Activated naive CD4-positive, alpha-beta T cell treated with anti-CD3 and anti-CD28 coated beads for 36 hours (primary cell): ENCODE measurements at regions of chr21 and their contacts with region 1.

Region 1: DNA sequence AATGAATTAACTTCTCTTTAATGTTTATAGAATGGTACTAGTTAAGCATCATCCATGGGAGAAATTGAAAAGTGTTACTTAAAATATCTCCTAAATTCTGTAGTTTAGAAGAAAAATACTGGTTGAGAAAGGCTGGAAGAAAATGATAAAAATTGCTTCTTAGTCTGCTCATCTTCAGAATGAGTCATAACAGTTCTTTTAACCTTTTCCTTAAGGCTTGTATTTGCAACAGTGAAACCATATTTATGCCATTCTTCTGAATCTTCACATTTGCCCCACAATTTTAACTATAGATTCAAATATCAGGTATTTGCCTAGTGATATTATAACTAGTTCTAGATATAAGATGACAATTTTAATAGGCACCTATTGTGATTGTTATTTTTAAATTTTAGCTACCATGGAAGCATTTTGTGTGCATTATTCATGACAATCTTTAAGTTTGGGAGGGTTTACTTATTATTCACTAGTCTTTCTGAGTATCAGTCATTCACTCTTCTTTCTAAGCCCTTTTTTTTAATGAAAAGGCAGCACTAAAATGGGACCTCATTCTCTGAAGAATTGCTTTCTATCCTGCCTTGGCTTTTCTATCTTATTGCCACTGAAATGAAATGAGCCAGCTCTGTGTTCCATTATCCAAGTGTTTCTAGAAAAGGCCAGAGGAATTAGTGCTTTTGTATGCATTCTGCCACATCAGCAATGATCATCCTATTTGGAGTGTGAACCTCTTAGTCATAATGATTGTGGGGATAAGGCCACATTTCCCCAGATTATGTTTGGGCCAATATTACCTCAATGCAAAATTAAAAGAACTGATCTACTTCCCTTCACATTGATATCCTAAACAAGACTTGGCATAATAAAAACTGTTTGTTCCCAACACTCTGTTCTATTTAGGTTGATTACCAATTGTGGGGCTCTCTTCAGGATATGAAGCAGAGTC is 58.4 kb downstream of the SAMSN1 start:
- DNase-seq: no peak
- H3K4me3 Mint-ChIP-seq: no peak overlapping the region
- H3K27ac Mint-ChIP-seq: peak overlapping the region; percentile 81
- H3K4me1 Mint-ChIP-seq: peaks cover 51% of the 10 kb centered on the region
- H3K27me3 Mint-ChIP-seq: no peaks in the 10 kb centered on the region

Region 2: DNA sequence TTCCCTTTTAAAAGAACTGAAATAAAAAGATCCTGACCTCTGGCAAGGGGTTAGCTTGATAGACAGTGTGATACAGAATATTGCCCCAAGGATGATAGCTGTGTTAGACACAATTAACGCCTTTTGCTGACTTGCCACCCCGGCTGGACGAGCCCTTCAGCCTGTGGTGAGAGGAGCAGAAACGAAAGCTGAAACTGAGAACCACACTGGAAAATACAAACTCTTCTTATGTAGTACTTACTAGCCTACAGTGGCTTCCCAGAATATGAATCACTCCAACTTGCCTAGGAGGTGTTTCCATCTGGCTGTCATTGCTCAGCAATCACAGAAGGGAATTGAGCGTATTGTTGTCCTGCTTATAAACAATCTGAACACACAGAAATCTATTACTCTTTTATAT is 35.5 kb after region 1 on chr21:
- CTCF ChIA-PET with region 1: interaction called, 3 read pairs
- intact Hi-C with region 1: loop called (anchors 2 kb)
- DNase-seq: peak; percentile 51
- H3K4me3 Mint-ChIP-seq: peak overlapping the region; percentile 55
- H3K27ac Mint-ChIP-seq: peak overlapping the region; percentile 68
- H3K4me1 Mint-ChIP-seq: peaks cover 53% of the 10 kb centered on the region
- H3K27me3 Mint-ChIP-seq: no peaks in the 10 kb centered on the region

Region 3: DNA sequence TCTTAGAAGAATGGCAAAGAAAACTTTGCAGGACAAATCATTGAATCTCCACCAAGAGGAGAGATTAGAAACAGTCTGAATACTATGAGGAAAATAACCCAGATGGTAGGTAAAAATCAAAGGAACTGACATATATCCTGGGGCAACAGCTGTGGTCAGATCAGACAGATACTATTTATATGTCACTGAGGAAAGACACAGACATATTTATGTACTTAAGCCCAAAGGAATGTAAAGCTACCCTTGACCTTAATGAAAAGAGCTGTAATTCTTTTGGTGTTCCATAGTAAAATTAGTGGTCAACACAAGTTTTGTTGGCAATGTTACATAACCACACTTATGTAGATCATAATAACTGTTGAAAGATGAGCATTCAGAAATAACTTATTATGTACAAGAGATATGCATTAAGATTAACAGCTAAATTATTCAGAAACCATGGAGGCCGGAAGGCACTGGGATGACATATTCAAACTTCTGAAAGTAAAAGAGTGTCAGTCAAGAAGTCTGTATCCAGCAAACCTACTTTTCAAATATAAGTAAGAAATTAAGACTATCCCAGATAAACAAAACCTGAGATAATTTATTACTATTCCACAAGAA is 224.5 kb after region 1 on chr21:
- CTCF ChIA-PET with region 1: no interaction called
- intact Hi-C with region 1: no loop called
- DNase-seq: no peak
- H3K4me3 Mint-ChIP-seq: no peak overlapping the region
- H3K27ac Mint-ChIP-seq: no peak overlapping the region
- H3K4me1 Mint-ChIP-seq: no peaks in the 10 kb centered on the region
- H3K27me3 Mint-ChIP-seq: no peaks in the 10 kb centered on the region